ENCODE measurements at regions of chr1 and their contacts with region 1.

Region 1: GRCh38 chr1:116377541-116378529 is 4.8 kb downstream of the ATP1A1 start:
- DNase-seq: peak; percentile 47
- H3K4me3 Mint-ChIP-seq: peak overlapping the region; percentile 72
- H3K27ac Mint-ChIP-seq: peak overlapping the region; percentile 95
- H3K4me1 Mint-ChIP-seq: peaks cover 64% of the 10 kb centered on the region
- H3K27me3 Mint-ChIP-seq: no peaks in the 10 kb centered on the region

Region 2: DNA sequence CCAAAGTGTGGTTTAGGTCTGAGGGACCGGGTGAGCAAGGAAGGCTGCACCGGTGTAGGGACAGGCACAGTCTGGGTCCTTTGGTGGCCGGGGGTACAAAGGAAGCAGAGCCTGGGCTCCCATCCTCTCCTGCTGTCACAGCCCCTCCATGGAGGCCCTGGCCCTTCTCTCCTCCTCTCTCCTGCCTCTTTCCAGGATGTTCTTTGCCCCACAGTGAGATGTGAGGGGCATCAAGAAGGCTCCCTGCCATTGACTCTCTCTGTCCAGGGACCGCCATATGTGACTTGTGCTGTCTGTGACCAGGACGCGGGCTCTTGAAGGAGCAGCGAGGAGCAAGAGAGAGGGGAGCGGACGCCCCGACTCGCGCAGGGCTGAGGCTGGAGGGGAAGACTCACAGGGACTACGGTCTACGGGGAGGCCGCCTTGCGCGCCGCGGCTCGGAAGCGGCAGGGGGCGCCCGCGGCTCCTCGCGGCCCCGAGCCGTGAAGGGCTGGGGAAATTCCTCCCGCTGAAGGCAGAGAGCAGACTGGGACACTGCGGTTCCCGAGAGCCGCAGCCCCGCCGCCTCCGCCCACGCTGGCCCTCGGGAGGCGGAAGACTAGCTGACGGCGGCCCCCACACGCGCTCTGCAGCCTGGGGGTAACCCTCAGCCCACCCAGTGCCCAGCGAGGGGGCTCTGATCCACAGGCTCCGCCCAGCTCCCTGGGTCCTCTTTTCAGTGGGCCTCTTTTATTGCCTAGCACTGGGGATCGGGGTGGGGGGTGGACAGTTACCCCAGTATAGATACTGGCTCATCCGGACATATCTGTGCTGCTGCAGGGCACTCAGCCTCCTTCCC is 225.9 kb before region 1 on chr1:
- CTCF ChIA-PET with region 1: interaction called, 9 read pairs
- intact Hi-C with region 1: loop called (anchors 1 kb)
- DNase-seq: peak; percentile 86
- H3K4me3 Mint-ChIP-seq: peak overlapping the region; percentile 60
- H3K27ac Mint-ChIP-seq: peak overlapping the region; percentile 14
- H3K4me1 Mint-ChIP-seq: peaks cover 18% of the 10 kb centered on the region
- H3K27me3 Mint-ChIP-seq: no peaks in the 10 kb centered on the region

Region 3: DNA sequence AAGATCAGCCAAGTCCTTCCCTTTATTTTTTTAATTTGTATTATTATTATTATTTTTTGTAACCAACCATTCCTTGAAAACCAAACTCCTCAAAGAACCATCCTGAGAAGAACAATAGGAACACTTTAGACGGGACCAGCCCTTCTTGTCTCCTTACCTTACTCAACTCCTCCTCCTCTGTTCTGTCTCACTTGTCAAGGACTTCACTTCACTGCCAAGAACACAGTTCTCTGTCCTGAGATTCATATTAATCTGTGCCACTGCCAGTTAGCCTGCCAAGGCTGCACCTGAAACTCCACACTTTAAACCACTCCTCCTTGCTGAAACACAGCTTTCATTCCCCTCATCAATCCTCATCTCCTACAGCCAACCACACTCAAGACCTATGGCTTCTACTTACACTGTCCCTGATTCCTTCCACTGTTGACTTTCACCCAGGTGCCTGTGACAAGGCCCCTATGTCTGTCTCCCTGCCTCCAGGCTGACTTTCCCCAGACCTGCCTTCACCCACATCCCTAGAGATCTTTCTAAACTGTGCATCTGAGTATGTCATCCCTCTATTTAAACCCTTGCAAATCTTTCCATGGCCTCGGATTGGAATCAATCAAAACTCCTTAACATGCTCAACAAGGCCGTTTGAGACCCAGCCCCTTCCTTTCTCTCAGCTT is 78.5 kb before region 1 on chr1:
- CTCF ChIA-PET with region 1: no interaction called
- intact Hi-C with region 1: no loop called
- DNase-seq: no peak
- H3K4me3 Mint-ChIP-seq: no peak overlapping the region
- H3K27ac Mint-ChIP-seq: no peak overlapping the region
- H3K4me1 Mint-ChIP-seq: peaks cover 5% of the 10 kb centered on the region
- H3K27me3 Mint-ChIP-seq: no peaks in the 10 kb centered on the region

Region 4: GRCh38 chr1:116352349-116352813 is 25.5 kb before region 1 on chr1:
- CTCF ChIA-PET with region 1: no interaction called
- intact Hi-C with region 1: loop called (anchors 1 kb)
- DNase-seq: peak; percentile 50
- H3K4me3 Mint-ChIP-seq: peak overlapping the region; percentile 14
- H3K27ac Mint-ChIP-seq: peak overlapping the region; percentile 22
- H3K4me1 Mint-ChIP-seq: peaks cover 48% of the 10 kb centered on the region
- H3K27me3 Mint-ChIP-seq: no peaks in the 10 kb centered on the region

Region 5: DNA sequence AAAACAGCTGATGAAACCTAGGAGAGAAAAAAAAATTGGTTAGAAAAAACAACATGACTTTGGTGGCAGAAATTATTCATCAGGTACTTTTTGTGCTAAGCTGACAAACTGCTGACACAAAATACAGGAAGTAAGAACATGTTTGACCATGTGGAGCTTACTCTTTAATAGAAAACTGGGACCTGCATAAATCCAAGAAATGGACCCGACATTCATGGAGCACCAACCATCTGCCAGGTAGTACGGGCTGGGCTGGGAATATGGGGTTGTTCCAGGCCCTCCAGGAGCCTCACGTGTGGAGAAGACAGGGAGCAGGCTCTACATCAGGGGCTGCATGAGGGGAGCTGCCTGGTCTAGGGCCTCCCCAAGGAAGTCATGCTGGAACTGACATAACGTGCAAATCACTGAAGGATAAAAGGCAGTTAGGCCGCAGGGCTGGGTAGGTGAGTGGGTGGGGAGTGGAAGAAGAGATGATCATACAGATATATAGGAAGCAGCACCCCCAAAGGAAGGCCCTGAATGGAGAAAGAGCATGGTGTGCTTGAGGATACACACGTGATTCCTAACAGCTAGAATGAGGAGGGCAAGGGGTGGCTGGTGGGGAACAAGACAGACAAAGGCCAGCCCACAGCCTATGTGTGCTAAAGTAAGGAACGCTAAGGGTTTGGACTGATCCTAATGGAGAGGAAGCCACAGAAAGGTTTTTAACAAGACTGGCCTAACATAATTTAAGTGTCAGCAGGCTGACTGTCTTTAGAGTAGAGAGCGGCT is 166.9 kb after region 1 on chr1:
- CTCF ChIA-PET with region 1: no interaction called
- intact Hi-C with region 1: loop called (anchors 1 kb)
- DNase-seq: peak; percentile 27
- H3K4me3 Mint-ChIP-seq: peak overlapping the region; percentile 60
- H3K27ac Mint-ChIP-seq: peak overlapping the region; percentile 84
- H3K4me1 Mint-ChIP-seq: peaks cover 27% of the 10 kb centered on the region
- H3K27me3 Mint-ChIP-seq: no peaks in the 10 kb centered on the region

Region 6: GRCh38 chr1:116826818-116827606 is 449.2 kb after region 1 on chr1:
- CTCF ChIA-PET with region 1: no interaction called
- intact Hi-C with region 1: loop called (anchors 1 kb)
- DNase-seq: peak; percentile 92
- H3K4me3 Mint-ChIP-seq: peak overlapping the region; percentile 83
- H3K27ac Mint-ChIP-seq: peak overlapping the region; percentile 97
- H3K4me1 Mint-ChIP-seq: peaks cover 74% of the 10 kb centered on the region
- H3K27me3 Mint-ChIP-seq: no peaks in the 10 kb centered on the region

Region 7: DNA sequence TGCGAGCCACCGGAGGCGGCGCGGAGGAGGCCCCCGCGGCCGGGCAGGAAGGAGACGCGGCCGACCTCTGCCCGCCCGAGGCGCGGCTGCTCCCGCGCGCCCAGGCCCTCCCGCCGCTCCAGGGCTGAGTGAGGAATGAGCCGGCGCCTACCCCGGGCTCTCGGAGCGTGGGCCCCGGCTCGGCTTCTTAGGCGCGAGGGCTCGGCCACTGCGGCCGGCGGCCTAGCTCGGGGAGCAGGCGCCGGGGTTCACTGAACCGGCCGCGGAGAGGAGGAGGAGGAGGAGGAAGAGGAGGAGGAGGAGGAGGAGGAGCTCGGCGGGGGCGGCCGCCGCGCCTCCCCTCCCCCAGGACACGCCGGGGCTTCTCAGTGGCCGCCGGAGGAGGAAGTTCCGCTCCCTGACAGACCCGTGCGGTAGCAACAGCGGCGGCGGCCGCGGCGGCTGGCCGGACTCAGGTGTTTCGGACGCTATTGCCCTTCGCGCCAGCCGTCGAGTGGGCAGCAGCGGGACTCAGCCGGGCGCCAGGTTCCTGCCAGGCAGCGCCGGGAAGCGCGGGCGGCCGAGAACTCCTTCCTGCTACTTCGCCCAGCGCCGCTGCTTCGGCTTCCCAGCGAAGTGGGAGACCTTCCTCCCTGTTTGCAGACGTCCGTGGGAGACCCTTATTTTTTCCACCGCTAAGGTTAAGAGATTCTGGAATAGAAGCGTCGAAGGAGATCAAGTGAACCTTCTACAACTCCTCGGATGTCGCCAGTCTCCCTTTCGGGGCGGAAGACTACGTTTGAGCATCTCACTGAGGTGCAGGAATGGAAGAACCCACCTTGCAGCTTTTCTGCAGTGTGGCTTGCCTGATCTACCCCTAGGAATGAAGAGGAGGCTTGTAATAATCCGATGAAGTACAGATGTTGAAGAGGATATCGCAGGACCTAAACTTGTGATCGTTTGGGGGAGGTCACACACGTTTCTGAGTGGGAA is 989.5 kb after region 1 on chr1 and contains the start of gene MAN1A2:
- CTCF ChIA-PET with region 1: no interaction called
- intact Hi-C with region 1: loop called (anchors 5 kb)
- DNase-seq: peak; percentile 76
- H3K4me3 Mint-ChIP-seq: peak within 1 kb of the TSS; percentile 94
- H3K27ac Mint-ChIP-seq: peak within 1 kb of the TSS; percentile 94
- H3K4me1 Mint-ChIP-seq: peaks cover 48% of the 10 kb centered on the region
- H3K27me3 Mint-ChIP-seq: no peaks in the 10 kb centered on the region
- total RNA-seq, gene MAN1A2: 14.6 to 17.4 TPM

Measured in activated naive CD4-positive, alpha-beta T cell treated with anti-CD3 and anti-CD28 coated beads for 36 hours (primary cell).